Calu3 (cell line): ENCODE measurements at regions of chr3 and their contacts with region 1.

Region 1: DNA sequence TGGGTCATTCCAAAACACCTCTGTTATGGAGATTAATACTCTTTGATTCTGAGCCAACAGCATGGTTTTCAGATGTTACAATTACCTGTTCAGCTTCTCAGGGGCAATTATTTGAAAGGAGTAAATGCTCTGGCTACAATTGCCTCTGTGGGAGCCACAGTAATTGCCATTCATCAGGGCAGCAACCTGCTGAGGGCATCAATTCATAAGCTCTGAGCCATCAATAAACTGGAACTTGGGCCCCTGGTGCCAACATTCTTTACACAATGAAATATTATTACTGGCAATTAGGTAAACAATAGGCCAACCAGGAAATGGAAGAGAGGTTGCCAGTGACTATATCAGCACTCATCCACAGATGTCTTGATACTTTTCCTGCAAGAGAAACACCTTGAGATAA is 660.8 kb downstream of the MECOM start:
- DNase-seq: peak; percentile 59
- H3K4me3 Mint-ChIP-seq: peak overlapping the region; percentile 27
- H3K27ac Mint-ChIP-seq: peak overlapping the region; percentile 72
- H3K4me1 Mint-ChIP-seq: peaks cover 44% of the 10 kb centered on the region
- H3K27me3 Mint-ChIP-seq: no peaks in the 10 kb centered on the region
- CTCF ChIP-seq: no peak

Region 2: DNA sequence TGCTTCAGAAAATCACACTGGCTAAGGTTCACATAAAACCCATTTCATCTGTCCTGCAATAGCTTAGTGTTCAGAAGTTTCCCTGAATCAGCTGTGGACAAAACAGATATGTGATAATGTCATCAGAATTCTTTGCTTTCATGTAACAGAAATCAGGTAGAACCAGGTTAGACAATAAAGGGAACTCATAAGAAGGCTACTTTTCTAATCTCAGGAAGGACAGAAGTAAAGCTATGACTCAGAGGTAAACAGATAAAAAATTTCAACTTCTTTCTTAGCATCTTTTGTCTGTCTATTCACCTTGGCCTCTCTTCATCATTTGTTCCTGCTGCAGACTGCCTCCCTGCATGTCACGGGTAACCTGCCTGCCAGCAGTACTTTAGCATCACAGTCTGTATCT is 17.7 kb after region 1 on chr3:
- CTCF ChIA-PET with region 1: interaction called, 5 read pairs
- intact Hi-C with region 1: loop called (anchors 2 kb)
- DNase-seq: no peak
- H3K4me3 Mint-ChIP-seq: no peak overlapping the region
- H3K27ac Mint-ChIP-seq: no peak overlapping the region
- H3K4me1 Mint-ChIP-seq: peaks cover 24% of the 10 kb centered on the region
- H3K27me3 Mint-ChIP-seq: no peaks in the 10 kb centered on the region
- CTCF ChIP-seq: no peak